Left cardiac atrium (tissue), 4 donors: ENCODE measurements at regions of chr7 and their contacts with region 1.

Region 1: DNA sequence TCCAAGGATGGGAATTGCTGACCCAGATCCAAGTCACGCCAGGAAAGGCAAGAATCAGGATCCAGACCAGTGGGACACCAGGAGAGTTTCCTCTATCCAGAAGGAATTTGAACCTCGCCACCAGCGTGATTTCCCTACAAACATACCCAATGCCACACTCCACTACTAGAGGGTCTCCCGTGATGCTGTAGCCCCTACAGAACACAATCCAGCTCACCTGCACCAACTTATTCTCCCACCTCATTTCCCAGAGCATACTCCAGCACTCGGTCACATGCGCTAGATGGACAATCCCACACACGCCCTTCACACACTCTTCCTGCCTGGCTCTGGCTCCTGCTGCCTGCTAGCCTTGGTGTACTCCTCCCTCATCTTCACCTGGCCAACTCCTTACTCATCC is 142.1 kb upstream of the PDE1C start:
- DNase-seq: no peak
- ATAC-seq: no peak

Region 2: GRCh38 chr7:32347244-32347828 is 135.0 kb after region 1 on chr7:
- intact Hi-C with region 1: loop called (anchors 2 to 5 kb)
- DNase-seq: no peak
- ATAC-seq: no peak